Mammary epithelial cell (primary cell): ENCODE measurements at regions of chr9 and their contacts with region 1.

Region 1: DNA sequence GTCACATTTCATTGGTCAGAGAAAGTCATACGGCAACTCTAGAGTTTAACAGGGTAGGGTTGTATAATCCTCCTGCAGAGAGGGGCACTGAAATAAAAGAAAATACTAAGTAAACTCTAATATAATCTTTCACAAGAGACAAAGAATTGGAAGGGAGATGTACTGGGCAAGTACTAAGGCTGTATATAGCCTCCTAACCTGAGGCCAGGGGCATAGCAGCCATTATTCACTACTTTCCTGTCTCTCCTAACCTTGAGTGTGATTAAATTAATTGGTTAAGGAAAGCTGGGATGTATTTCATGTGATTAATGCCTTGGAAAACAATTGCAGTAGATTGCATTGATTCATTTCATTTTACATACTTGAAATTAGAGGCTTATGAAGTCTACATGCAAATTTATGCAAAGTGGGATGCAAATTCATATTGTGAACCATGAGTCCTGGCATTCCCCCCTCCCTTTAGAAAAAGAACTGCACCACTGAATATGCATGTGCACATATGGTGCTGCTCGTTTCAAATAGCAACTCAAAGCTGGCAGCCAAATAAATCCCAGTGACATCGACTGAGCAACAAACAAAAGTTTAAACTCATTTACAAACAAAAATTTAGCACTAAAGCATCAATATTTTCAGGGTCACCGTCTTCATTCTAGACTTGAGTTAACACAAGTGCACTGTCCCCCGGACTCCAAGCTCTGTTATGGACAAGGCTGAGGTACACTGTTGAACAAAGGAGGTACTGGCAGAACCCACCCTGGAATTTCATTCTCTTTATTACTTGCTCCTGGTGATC is 70.0 kb downstream of the DMAC1 start:
- DNase-seq: no peak
- H3K4me3 ChIP-seq: no peak overlapping the region
- H3K27ac ChIP-seq: no peak overlapping the region
- H3K4me1 ChIP-seq: no peaks in the 10 kb centered on the region
- H3K27me3 ChIP-seq: no peaks in the 10 kb centered on the region
- CTCF ChIP-seq: no peak

Region 2: DNA sequence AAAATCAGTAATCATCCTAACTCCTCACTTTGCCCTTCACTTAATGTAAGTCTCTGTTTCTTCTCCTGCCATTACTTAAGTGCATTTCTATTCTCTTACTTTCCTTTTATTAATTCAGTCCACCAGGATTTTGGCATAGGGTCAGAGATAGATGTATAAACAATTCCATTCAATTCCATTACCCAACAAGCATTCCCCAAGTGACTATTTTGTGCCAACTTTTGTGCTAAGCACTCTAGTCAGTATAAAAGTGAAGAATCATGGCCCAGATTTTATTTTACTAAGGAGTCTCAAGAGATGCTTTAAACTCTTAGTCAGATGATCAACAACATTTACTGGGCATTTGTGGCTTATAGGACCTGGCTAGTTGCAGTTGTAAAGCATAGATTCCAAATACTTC is 89.3 kb before region 1 on chr9:
- CTCF ChIA-PET with region 1: no interaction called
- dilution Hi-C with region 1: loop called (anchors 5 kb)
- in situ Hi-C with region 1: loop called in 1 of 2 experiments (anchors 25 kb)
- intact Hi-C with region 1: no loop called
- DNase-seq: no peak
- H3K4me3 ChIP-seq: no peak overlapping the region
- H3K27ac ChIP-seq: no peak overlapping the region
- H3K4me1 ChIP-seq: no peaks in the 10 kb centered on the region
- H3K27me3 ChIP-seq: no peaks in the 10 kb centered on the region
- CTCF ChIP-seq: no peak

Region 3: DNA sequence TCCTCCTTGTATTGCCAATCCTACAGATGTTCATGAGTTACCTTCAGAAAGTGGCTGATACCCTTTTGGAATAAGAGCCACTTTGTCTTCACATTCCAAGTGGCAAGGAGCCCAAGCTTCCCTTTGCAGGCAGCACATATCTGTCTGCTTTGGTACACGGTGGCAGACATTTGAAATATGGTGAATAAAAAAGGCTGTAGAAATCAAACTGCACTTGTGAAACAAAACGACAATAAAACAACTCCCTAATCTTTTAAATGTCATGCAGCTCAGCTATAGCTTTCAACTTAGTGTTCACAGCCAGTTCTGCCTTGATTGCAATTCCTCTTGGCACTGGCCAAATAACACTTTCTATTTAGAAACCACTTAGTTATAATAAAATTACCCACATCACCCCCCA is 105.0 kb after region 1 on chr9:
- CTCF ChIA-PET with region 1: no interaction called
- dilution Hi-C with region 1: loop called (anchors 5 kb)
- in situ Hi-C with region 1: no loop called
- intact Hi-C with region 1: no loop called
- DNase-seq: no peak
- H3K4me3 ChIP-seq: no peak overlapping the region
- H3K27ac ChIP-seq: no peak overlapping the region
- H3K4me1 ChIP-seq: no peaks in the 10 kb centered on the region
- H3K27me3 ChIP-seq: no peaks in the 10 kb centered on the region
- CTCF ChIP-seq: no peak